ENCODE measurements at regions of chr12 and their contacts with region 1.

Region 1: DNA sequence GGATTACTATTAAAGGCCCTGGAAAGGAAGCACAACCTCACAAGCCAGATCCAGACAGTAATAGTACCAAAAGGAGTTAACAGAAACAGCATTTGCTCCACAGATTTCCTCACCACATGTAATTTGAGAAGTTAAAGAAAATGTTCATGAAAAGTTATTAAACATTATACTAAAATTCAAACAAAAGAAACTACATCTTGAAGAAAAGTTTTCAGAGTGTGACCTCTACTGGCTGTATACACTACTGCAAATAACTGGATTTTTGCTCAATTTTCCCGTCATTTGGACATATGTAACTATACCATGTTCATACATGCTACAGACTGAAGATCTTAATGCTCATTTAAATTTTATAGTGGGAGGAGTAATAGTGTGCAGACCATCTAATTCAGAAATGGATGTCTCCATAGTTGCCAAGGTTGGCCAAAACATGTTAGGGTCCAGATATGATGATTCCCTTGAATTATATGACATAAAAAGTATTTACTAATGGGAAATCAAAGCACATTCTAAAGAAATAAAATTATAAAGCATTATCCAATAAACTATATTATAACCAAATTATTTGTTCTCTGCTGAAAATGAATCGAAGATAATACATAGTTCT is 5.6 kb downstream of the KRR1 start:
- DNase-seq: no peak
- ATAC-seq: peak; percentile 45
- H3K4me3 Mint-ChIP-seq: no peak overlapping the region
- H3K27ac Mint-ChIP-seq: no peak overlapping the region
- H3K4me1 Mint-ChIP-seq: peaks cover 17% of the 10 kb centered on the region
- H3K27me3 Mint-ChIP-seq: no peaks in the 10 kb centered on the region
- CTCF ChIP-seq: no peak

Region 2: GRCh38 chr12:74339211-74339610 is 1166.6 kb before region 1 on chr12:
- CTCF ChIA-PET with region 1: no interaction called
- POLR2A ChIA-PET with region 1: no interaction called
- intact Hi-C with region 1: no loop called
- DNase-seq: no peak
- ATAC-seq: no peak
- H3K4me3 Mint-ChIP-seq: no peak overlapping the region
- H3K27ac Mint-ChIP-seq: no peak overlapping the region
- H3K4me1 Mint-ChIP-seq: no peaks in the 10 kb centered on the region
- H3K27me3 Mint-ChIP-seq: no peaks in the 10 kb centered on the region
- CTCF ChIP-seq: no peak

Region 3: GRCh38 chr12:75437564-75437963 is 68.2 kb before region 1 on chr12:
- CTCF ChIA-PET with region 1: interaction called, 17 read pairs
- POLR2A ChIA-PET with region 1: no interaction called
- intact Hi-C with region 1: loop called (anchors 1 kb)
- DNase-seq: no peak
- ATAC-seq: peak; percentile 72
- H3K4me3 Mint-ChIP-seq: no peak overlapping the region
- H3K27ac Mint-ChIP-seq: no peak overlapping the region
- H3K4me1 Mint-ChIP-seq: peaks cover 3% of the 10 kb centered on the region
- H3K27me3 Mint-ChIP-seq: peaks cover 10% of the 10 kb centered on the region
- CTCF ChIP-seq: no peak

Measured in activated B cell treated with CpG ODN at 0.5 μM for 24 hours (primary cell).